Heart left ventricle (tissue), 16 donors: ENCODE measurements at regions of chrX and their contacts with region 1.

Region 1: GRCh38 chrX:147476008-147476407 is 435.7 kb upstream of the FMR1 start:
- DNase-seq: no peak
- ATAC-seq: no peak
- H3K4me3 ChIP-seq: no peak overlapping the region
- H3K27ac ChIP-seq: no peak overlapping the region
- H3K4me1 ChIP-seq: no peaks in the 10 kb centered on the region
- H3K27me3 ChIP-seq: no peaks in the 10 kb centered on the region
- CTCF ChIP-seq: peak in 5 of 12 donors; percentile 10 to 25 (median 18)
- POLR2A ChIP-seq: no peak

Region 2: DNA sequence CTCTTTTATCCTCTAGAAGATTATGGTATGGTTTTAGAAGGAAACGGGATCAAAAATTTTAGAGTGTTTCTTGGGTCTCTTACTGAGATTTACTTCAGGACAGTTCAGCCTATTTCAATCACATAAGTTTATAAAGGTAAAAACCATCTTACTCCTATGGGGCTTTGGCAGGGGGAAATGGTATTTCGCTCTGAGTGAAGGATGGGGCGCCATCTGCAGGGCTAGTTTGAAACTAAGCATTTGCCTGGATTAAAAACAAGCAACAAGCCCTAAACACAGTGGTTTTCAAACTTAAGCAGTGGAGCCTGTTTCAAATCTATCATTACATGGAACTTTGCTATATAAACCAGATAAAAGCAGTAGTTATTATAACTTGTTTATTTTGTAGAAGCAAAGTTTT is 74.2 kb after region 1 on chrX:
- intact Hi-C with region 1: loop called in 1 of 10 experiments (anchors 5 kb)
- DNase-seq: no peak
- ATAC-seq: no peak
- H3K4me3 ChIP-seq: no peak overlapping the region
- H3K27ac ChIP-seq: no peak overlapping the region
- H3K4me1 ChIP-seq: no peaks in the 10 kb centered on the region
- H3K27me3 ChIP-seq: no peaks in the 10 kb centered on the region
- CTCF ChIP-seq: peak in 5 of 12 donors; percentile 8 to 26 (median 12)
- POLR2A ChIP-seq: no peak

Region 3: DNA sequence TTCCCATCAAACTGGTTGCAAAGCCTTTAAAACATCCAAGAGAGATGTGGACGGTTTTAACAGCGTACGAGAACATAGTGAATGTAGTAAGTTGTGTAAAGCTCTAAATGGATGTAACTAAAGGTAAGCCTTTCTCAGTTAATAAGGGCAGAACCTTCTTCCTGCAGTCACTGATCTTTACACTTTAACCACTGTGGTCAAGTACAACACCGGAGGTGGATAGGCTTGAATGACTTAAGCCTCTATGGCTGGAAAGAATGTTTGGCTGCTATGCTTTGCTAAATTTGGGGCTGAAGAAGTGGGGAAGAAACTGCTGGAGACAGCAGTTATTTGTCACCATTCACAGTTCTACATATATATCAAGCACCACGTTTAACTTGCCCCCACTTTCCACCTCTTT is 150.6 kb after region 1 on chrX:
- intact Hi-C with region 1: no loop called
- DNase-seq: no peak
- ATAC-seq: no peak
- H3K4me3 ChIP-seq: no peak overlapping the region
- H3K27ac ChIP-seq: no peak overlapping the region
- H3K4me1 ChIP-seq: no peaks in the 10 kb centered on the region
- H3K27me3 ChIP-seq: no peaks in the 10 kb centered on the region
- CTCF ChIP-seq: no peak
- POLR2A ChIP-seq: no peak